MCF 10A (cell line): ENCODE measurements at regions of chr5 and their contacts with region 1.

Region 1: GRCh38 chr5:149517461-149518122 is 33.6 kb downstream of the CSNK1A1 start:
- DNase-seq: peak; percentile 43
- H3K4me3 Mint-ChIP-seq: peak overlapping the region; percentile 36
- H3K27ac Mint-ChIP-seq: peak overlapping the region; percentile 52
- H3K4me1 Mint-ChIP-seq: peaks cover 63% of the 10 kb centered on the region
- H3K27me3 Mint-ChIP-seq: no peaks in the 10 kb centered on the region
- CTCF ChIP-seq: no peak

Region 2: DNA sequence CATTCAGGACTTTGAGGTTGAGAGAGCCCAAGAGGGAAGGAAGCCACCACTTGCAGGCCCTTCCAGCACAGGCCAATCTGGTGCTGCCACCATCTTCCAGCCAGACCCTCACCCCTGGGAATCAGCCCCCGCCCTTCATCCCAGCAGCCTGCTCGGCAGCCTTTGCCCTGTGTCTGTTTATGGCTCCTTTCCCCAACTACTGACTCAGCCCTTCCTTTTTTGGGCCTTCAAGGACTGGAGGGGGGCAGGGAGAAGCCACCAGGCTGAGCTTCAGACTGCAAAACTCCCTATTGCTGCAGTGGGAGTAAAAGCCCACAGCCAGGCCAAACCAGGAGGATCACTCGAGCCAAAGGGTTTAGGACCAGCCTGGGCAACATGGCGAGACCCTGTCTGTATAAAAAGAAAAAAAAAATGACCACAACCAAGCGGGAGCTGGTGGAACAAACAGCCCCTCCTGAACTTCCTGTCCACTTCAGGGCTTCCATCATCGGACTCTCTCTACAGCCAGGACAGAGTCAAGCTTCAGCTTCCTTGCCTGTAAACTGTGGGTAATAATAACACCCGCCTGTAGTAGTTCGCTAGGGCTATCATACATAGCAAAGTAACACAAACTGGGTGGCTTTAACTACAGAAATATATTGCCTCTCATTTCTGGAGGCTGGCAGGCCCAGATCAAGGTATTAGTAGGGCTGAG is 52.6 kb before region 1 on chr5:
- CTCF ChIA-PET with region 1: no interaction called
- POLR2A ChIA-PET with region 1: no interaction called
- intact Hi-C with region 1: no loop called
- DNase-seq: no peak
- H3K4me3 Mint-ChIP-seq: no peak overlapping the region
- H3K27ac Mint-ChIP-seq: no peak overlapping the region
- H3K4me1 Mint-ChIP-seq: peaks cover 5% of the 10 kb centered on the region
- H3K27me3 Mint-ChIP-seq: no peaks in the 10 kb centered on the region
- CTCF ChIP-seq: no peak

Region 3: DNA sequence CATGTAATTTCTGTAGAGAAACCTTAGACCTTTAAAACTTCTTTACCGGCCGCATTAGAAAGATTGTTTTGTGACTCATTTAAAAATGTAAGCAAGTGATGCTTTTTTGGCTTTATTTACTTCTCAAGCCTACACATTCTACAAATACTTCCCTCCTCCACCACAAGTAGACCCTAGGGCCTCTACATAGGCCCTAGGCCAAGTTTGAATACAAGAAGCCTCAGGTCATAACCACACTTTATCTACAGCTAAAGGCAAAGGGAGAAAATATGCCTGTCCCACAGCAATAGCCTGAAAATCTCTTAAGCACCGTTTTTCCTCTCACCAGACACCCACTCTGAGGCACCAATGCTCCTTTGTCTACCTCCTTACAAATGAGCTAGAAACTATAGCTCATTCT is 20.2 kb before region 1 on chr5:
- CTCF ChIA-PET with region 1: interaction called, 5 read pairs
- POLR2A ChIA-PET with region 1: interaction called, 191 read pairs
- intact Hi-C with region 1: no loop called
- DNase-seq: no peak
- H3K4me3 Mint-ChIP-seq: no peak overlapping the region
- H3K27ac Mint-ChIP-seq: peak overlapping the region; percentile 14
- H3K4me1 Mint-ChIP-seq: no peaks in the 10 kb centered on the region
- H3K27me3 Mint-ChIP-seq: no peaks in the 10 kb centered on the region
- CTCF ChIP-seq: no peak

Region 4: GRCh38 chr5:149503006-149503405 is 14.6 kb before region 1 on chr5:
- CTCF ChIA-PET with region 1: interaction called, 10 read pairs
- POLR2A ChIA-PET with region 1: interaction called, 191 read pairs
- intact Hi-C with region 1: no loop called
- DNase-seq: no peak
- H3K4me3 Mint-ChIP-seq: no peak overlapping the region
- H3K27ac Mint-ChIP-seq: no peak overlapping the region
- H3K4me1 Mint-ChIP-seq: no peaks in the 10 kb centered on the region
- H3K27me3 Mint-ChIP-seq: no peaks in the 10 kb centered on the region
- CTCF ChIP-seq: no peak

Region 5: DNA sequence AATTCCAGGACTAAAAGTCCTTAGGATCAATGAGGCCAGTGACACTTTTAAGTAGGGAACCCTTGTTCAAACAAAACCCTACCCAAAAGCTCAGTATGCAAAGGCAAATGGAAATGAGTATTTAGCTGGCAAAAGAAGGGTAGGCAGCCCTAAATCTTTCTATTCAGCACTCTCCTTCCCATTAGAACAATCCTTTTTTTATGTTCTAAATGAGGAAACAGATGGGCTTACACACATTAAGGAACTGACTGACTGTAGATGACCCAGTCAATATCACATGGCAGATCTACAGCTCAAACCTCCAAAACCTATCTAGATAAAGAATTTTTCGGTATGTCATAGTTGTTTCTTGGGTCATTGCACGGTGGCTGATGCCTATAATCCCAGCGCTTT is 26.4 kb after region 1 on chr5:
- CTCF ChIA-PET with region 1: interaction called, 10 read pairs
- POLR2A ChIA-PET with region 1: interaction called, 379 read pairs
- intact Hi-C with region 1: no loop called
- DNase-seq: no peak
- H3K4me3 Mint-ChIP-seq: peak overlapping the region; percentile 14
- H3K27ac Mint-ChIP-seq: no peak overlapping the region
- H3K4me1 Mint-ChIP-seq: peaks cover 33% of the 10 kb centered on the region
- H3K27me3 Mint-ChIP-seq: no peaks in the 10 kb centered on the region
- CTCF ChIP-seq: no peak